Sciatic nerve (tissue), 2 donors: ENCODE measurements at regions of chr3 and their contacts with region 1.

Region 1: GRCh38 chr3:24237971-24238767 is 256.5 kb downstream of the THRB start:
- DNase-seq: no peak
- ATAC-seq: peak; percentile 85

Region 2: GRCh38 chr3:24004171-24004938 is 233.8 kb before region 1 on chr3:
- intact Hi-C with region 1: loop called (anchors 10 kb)
- DNase-seq: no peak
- ATAC-seq: no peak

Region 3: GRCh38 chr3:24185738-24186384 is 52.3 kb before region 1 on chr3:
- intact Hi-C with region 1: loop called (anchors 10 kb)
- DNase-seq: peak; percentile 58
- ATAC-seq: peak; percentile 76

Region 4: GRCh38 chr3:25648107-25648535 is 1410.0 kb after region 1 on chr3:
- intact Hi-C with region 1: no loop called
- DNase-seq: peak; percentile 80
- ATAC-seq: peak; percentile 78